ENCODE measurements at regions of chr15 and their contacts with region 1.

Region 1: GRCh38 chr15:64809649-64810496 is 15.6 kb downstream of the PIF1 start:
- DNase-seq: peak; percentile 86
- ATAC-seq: peak; percentile 92
- H3K4me3 ChIP-seq: no peak overlapping the region
- H3K27ac ChIP-seq: no peak overlapping the region
- H3K4me1 ChIP-seq: no peaks in the 10 kb centered on the region
- H3K27me3 ChIP-seq: no peaks in the 10 kb centered on the region
- CTCF ChIP-seq: peak; percentile 88

Region 2: DNA sequence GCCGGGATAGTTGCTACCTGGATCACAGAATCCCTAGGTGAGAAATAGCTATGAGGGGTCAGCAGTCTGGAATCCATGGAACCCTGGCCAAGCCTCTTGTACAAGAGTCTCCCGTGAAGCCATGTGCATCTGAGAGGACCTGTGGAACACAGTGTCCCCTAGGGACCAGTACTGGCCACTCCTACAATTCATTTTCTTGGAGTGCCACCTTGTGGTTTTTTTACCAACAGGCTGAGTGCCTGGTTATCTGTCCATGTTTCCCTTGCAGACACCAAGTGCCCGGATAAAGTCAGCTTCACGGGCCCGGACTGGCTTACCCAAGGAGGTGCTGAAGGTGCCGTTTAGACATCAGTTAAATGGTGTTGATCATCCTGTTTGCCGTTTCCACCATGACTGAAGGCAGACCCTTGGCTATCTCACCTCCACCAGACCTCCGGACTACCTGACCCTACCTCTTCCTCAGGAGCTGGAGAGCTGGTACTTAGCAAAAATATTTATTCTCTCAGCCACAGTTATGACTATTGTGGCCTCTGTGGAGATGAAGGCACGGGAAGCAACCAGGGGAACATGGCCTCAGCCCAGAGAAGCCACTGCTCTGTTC is 128.3 kb before region 1 on chr15:
- intact Hi-C with region 1: loop called (anchors 10 kb)
- DNase-seq: no peak
- ATAC-seq: peak; percentile 91
- H3K4me3 ChIP-seq: no peak overlapping the region
- H3K27ac ChIP-seq: no peak overlapping the region
- H3K4me1 ChIP-seq: no peaks in the 10 kb centered on the region
- H3K27me3 ChIP-seq: no peaks in the 10 kb centered on the region
- CTCF ChIP-seq: peak; percentile 68